ENCODE measurements at regions of chr6 and their contacts with region 1.

Region 1: DNA sequence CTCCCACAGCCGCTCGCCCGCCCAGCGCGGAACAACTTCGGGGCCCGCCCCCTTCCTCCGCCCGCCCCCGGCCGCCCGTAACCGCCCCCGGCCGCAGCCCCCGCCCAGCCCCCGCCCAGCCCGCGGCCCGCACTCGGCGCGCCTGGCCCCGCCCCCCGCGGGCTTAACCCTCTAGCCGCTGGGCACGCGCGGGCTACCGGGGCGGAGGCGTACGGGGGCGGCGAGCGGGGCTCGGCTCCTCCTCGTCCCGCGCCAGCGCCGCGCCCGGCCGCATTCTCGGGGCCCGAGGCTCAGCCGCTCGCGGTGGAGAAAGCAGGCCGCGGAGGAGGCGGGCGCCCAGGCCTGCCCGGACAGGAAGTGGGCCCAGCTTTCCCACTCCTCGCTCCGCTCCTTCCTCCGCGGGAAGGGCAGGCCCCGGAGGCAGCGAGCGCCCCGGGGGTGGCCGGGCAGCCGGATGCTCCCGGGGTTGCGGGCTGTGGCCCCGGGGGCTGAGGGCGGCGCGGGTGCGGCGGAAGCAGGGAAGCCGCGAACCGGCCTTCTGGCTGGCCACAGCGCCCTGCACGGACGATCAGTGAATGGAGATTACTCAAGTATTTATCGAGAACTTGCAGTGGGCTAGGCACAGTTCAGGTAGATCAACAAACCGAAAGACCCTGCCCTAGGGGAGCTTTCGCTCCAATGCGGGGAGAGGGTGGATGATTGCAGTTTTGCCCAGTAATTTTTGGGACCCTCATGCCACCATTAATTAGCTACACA is at the start of gene TRAM2:
- DNase-seq: peak; percentile 89 to 95
- H3K4me3 ChIP-seq: peak within 1 kb of the TSS; percentile 76 to 91 (median 90)
- H3K27ac ChIP-seq: peak within 1 kb of the TSS; percentile 96 to 99 (median 99)
- H3K4me1 ChIP-seq: peaks cover 37 to 59% (median 48%) of the 10 kb centered on the region in 4 donors
- H3K27me3 ChIP-seq: no peaks in the 10 kb centered on the region
- CTCF ChIP-seq: no peak
- EP300 ChIP-seq: no peak
- POLR2A ChIP-seq: peak in 1 of 4 donors; percentile 13
- total RNA-seq, gene TRAM2: 1.4 to 14.1 (median 6.4) TPM

Region 2: GRCh38 chr6:52503848-52504781 is 73.1 kb before region 1 on chr6:
- intact Hi-C with region 1: loop called (anchors 10 kb)
- DNase-seq: peak; percentile 96 to 98
- H3K4me3 ChIP-seq: no peak overlapping the region
- H3K27ac ChIP-seq: peak overlapping the region; percentile 78 to 80 (median 79)
- H3K4me1 ChIP-seq: peaks cover 22 to 55% (median 39%) of the 10 kb centered on the region in 4 donors
- H3K27me3 ChIP-seq: no peaks in the 10 kb centered on the region
- CTCF ChIP-seq: no peak
- EP300 ChIP-seq: no peak
- POLR2A ChIP-seq: no peak

Measured in stomach (tissue), 19 donors.